B cell (primary cell): ENCODE measurements at regions of chr5 and their contacts with region 1.

Region 1: DNA sequence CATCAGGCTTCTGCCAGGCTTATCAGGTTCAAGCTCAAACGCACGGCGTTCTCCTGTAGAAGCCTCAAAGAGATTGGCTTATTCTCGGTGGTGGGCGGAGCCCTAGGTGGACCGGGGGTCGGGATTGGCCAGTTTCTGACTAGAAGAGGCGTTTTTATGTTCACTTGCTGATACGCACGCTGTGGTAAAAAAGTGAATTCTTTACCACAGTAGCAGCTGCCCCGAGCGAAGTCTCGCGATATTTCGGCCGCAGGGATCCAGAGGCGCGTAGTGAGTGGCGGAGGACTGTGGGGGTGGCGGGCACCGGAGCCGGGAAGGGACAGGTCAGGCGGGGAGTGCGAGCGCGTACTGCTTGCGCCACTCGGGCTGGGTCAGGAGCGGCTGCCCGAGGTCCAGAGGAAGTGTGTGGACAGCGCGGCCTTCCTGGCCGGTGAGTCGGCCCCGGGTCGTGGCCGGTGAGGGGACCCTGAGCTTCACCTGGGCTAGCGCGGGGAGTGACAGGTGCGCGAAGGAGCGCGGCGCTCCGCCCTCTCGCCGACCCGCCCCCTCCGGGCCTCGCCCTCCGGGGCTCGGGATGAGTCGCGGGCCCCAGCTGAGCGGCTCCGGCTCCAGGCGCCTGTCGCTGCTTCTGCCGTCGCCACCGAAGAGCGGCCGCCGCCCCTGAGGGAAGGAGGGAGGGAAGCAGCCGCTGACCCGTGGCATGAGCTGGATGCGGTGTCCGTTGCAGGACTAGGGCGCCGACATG is at the start of gene DMXL1:
- DNase-seq: peak; percentile 99
- ATAC-seq: peak; percentile 81
- H3K4me3 ChIP-seq: peak within 1 kb of the TSS; percentile 66 to 98 (median 91)
- H3K4me3 Mint-ChIP-seq: peak within 1 kb of the TSS; percentile 99
- H3K27ac ChIP-seq: peak within 1 kb of the TSS; percentile 94 to 97
- H3K27ac Mint-ChIP-seq: peak within 1 kb of the TSS; percentile 100
- H3K4me1 ChIP-seq: peaks cover 35 to 43% of the 10 kb centered on the region in 2 donors
- H3K4me1 Mint-ChIP-seq: peaks cover 40% of the 10 kb centered on the region
- H3K27me3 ChIP-seq: no peaks in the 10 kb centered on the region
- H3K27me3 Mint-ChIP-seq: no peaks in the 10 kb centered on the region
- CTCF ChIP-seq: no peak
- total RNA-seq, gene DMXL1: 129 and 135 TPM in 2 replicates

Region 2: GRCh38 chr5:119016125-119016774 is 54.8 kb before region 1 on chr5:
- CTCF ChIA-PET with region 1: interaction called, 18 read pairs
- POLR2A ChIA-PET with region 1: interaction called, 15 read pairs
- intact Hi-C with region 1: no loop called
- DNase-seq: peak; percentile 80
- ATAC-seq: peak; percentile 81
- H3K4me3 ChIP-seq: peak overlapping the region in 1 of 5 experiments; percentile 4
- H3K4me3 Mint-ChIP-seq: no peak overlapping the region
- H3K27ac ChIP-seq: peak overlapping the region; percentile 79 to 82
- H3K27ac Mint-ChIP-seq: peak overlapping the region; percentile 60
- H3K4me1 ChIP-seq: peaks cover 52 to 55% of the 10 kb centered on the region in 2 donors
- H3K4me1 Mint-ChIP-seq: peaks cover 47% of the 10 kb centered on the region
- H3K27me3 ChIP-seq: no peaks in the 10 kb centered on the region
- H3K27me3 Mint-ChIP-seq: no peaks in the 10 kb centered on the region
- CTCF ChIP-seq: no peak

Region 3: GRCh38 chr5:119031905-119032304 is 39.1 kb before region 1 on chr5:
- CTCF ChIA-PET with region 1: interaction called, 5 read pairs
- POLR2A ChIA-PET with region 1: interaction called, 10 read pairs
- intact Hi-C with region 1: loop called (anchors 1 kb)
- DNase-seq: peak; percentile 63
- ATAC-seq: peak; percentile 80
- H3K4me3 ChIP-seq: peak overlapping the region in 1 of 5 experiments; percentile 54
- H3K4me3 Mint-ChIP-seq: peak overlapping the region; percentile 81
- H3K27ac ChIP-seq: peak overlapping the region; percentile 82 to 83
- H3K27ac Mint-ChIP-seq: peak overlapping the region; percentile 95
- H3K4me1 ChIP-seq: peaks cover 38 to 52% of the 10 kb centered on the region in 2 donors
- H3K4me1 Mint-ChIP-seq: peaks cover 50% of the 10 kb centered on the region
- H3K27me3 ChIP-seq: no peaks in the 10 kb centered on the region
- H3K27me3 Mint-ChIP-seq: no peaks in the 10 kb centered on the region
- CTCF ChIP-seq: no peak

Region 4: GRCh38 chr5:119105971-119106370 is 35.0 kb after region 1 on chr5:
- CTCF ChIA-PET with region 1: interaction called, 3 read pairs
- POLR2A ChIA-PET with region 1: no interaction called
- intact Hi-C with region 1: loop called (anchors 5 kb)
- DNase-seq: no peak
- ATAC-seq: no peak
- H3K4me3 ChIP-seq: no peak overlapping the region
- H3K4me3 Mint-ChIP-seq: no peak overlapping the region
- H3K27ac ChIP-seq: no peak overlapping the region
- H3K27ac Mint-ChIP-seq: no peak overlapping the region
- H3K4me1 ChIP-seq: no peaks in the 10 kb centered on the region
- H3K4me1 Mint-ChIP-seq: peaks cover 5% of the 10 kb centered on the region
- H3K27me3 ChIP-seq: no peaks in the 10 kb centered on the region
- H3K27me3 Mint-ChIP-seq: no peaks in the 10 kb centered on the region
- CTCF ChIP-seq: no peak

Region 5: DNA sequence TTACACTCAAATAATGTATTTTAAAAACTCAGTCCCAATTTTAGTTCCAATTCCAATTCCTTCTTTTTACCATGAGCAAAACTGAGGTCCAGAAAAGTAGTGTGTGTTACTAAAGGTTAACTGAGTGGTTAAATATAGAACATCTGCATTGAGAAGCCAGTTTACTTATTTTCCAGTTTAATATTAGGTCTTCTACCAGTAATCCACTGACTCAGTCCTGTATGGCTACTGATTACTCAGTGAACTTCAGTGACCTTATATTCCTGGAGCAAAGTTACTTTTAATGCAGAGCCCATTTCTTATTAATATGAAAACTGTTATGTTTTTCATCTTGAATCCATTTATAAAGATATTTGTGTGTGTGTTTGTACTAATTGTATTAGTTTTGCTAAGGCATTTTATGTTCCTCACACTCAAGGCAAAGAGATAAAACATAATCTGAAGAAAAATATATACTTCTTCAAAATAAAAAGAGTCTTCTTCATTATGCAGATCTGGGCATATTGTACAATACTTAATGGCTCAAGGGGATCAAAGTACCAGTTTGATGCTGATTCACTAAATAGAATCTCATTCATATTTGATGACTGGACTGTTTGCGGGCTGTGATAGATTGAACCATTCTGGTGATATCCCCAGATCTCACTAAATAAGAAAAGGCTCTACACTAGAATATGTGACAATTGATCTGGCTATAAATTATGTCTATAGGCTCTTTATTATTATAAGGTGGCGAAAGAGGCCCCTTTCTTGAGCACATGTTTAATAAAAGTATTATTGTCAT is 60.7 kb after region 1 on chr5:
- CTCF ChIA-PET with region 1: no interaction called
- POLR2A ChIA-PET with region 1: no interaction called
- intact Hi-C with region 1: no loop called
- DNase-seq: no peak
- ATAC-seq: no peak
- H3K4me3 ChIP-seq: no peak overlapping the region
- H3K4me3 Mint-ChIP-seq: no peak overlapping the region
- H3K27ac ChIP-seq: no peak overlapping the region
- H3K27ac Mint-ChIP-seq: no peak overlapping the region
- H3K4me1 ChIP-seq: no peaks in the 10 kb centered on the region
- H3K4me1 Mint-ChIP-seq: no peaks in the 10 kb centered on the region
- H3K27me3 ChIP-seq: no peaks in the 10 kb centered on the region
- H3K27me3 Mint-ChIP-seq: no peaks in the 10 kb centered on the region
- CTCF ChIP-seq: no peak

Region 6: GRCh38 chr5:119267958-119268386 is 197.0 kb after region 1 on chr5:
- CTCF ChIA-PET with region 1: interaction called, 3 read pairs
- POLR2A ChIA-PET with region 1: interaction called, 5 read pairs
- intact Hi-C with region 1: loop called (anchors 1 kb)
- DNase-seq: peak; percentile 94
- ATAC-seq: peak; percentile 63
- H3K4me3 ChIP-seq: peak overlapping the region; percentile 79 to 99 (median 96)
- H3K4me3 Mint-ChIP-seq: peak overlapping the region; percentile 98
- H3K27ac ChIP-seq: peak overlapping the region; percentile 83 to 91
- H3K27ac Mint-ChIP-seq: peak overlapping the region; percentile 95
- H3K4me1 ChIP-seq: peaks cover 39 to 40% of the 10 kb centered on the region in 2 donors
- H3K4me1 Mint-ChIP-seq: peaks cover 51% of the 10 kb centered on the region
- H3K27me3 ChIP-seq: no peaks in the 10 kb centered on the region
- H3K27me3 Mint-ChIP-seq: no peaks in the 10 kb centered on the region
- CTCF ChIP-seq: peak; percentile 38

Region 7: DNA sequence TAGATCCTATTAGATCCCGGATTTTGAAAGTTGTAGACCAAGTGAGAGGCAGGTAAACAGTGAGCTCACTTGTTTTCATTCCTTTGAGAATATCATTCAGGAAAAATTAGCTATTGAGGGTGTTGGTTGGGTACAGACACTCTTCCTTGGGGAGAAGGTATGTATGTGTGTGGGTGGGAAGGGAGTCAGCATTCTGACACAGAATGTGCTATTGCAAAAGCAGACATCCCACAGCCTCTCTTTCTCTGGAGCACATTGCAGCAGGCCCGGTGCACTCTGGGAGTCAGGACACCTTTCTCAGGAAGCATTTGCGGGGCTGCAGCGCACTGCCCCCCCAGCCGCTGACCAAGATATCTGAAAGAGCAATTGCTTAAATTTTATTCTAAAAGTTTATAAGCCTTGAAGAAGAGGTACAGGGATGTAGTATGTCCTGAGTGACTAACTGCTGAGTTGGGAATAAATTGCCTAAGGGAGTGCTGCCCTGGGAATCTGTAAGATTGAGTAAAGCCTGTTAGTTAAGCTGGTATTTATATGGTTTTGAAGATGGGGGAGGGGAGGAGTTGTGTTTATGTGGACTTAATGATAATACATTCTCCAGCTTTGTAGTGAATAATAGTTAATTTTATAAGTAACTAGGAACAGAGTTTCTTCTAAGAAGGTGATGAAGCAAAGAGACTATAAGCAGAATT is 290.0 kb after region 1 on chr5:
- CTCF ChIA-PET with region 1: no interaction called
- POLR2A ChIA-PET with region 1: interaction called, 12 read pairs
- intact Hi-C with region 1: no loop called
- DNase-seq: no peak
- ATAC-seq: no peak
- H3K4me3 ChIP-seq: no peak overlapping the region
- H3K4me3 Mint-ChIP-seq: peak overlapping the region; percentile 58
- H3K27ac ChIP-seq: peak overlapping the region; percentile 8 to 91
- H3K27ac Mint-ChIP-seq: peak overlapping the region; percentile 93
- H3K4me1 ChIP-seq: peaks cover 80 to 82% of the 10 kb centered on the region in 2 donors
- H3K4me1 Mint-ChIP-seq: peaks cover 91% of the 10 kb centered on the region
- H3K27me3 ChIP-seq: no peaks in the 10 kb centered on the region
- H3K27me3 Mint-ChIP-seq: no peaks in the 10 kb centered on the region
- CTCF ChIP-seq: no peak